ENCODE measurements at regions of chr10 and their contacts with region 1.

Region 1: GRCh38 chr10:67261300-67261797 is 335.5 kb downstream of the LRRTM3 start:
- DNase-seq: no peak
- ATAC-seq: no peak
- H3K4me3 ChIP-seq: no peak overlapping the region
- H3K27ac ChIP-seq: no peak overlapping the region; the same call in 1 of the 2 replicates
- H3K4me1 ChIP-seq: peaks cover 11% of the 10 kb centered on the region; the same call in 1 of the 2 replicates
- H3K27me3 ChIP-seq: no peaks in the 10 kb centered on the region
- CTCF ChIP-seq: no peak

Region 2: GRCh38 chr10:67015225-67015624 is 246.1 kb before region 1 on chr10:
- CTCF ChIA-PET with region 1: no interaction called
- POLR2A ChIA-PET with region 1: no interaction called
- in situ Hi-C with region 1: no loop called
- intact Hi-C with region 1: no loop called
- DNase-seq: no peak
- ATAC-seq: no peak
- H3K4me3 ChIP-seq: no peak overlapping the region
- H3K27ac ChIP-seq: no peak overlapping the region
- H3K4me1 ChIP-seq: no peaks in the 10 kb centered on the region
- H3K27me3 ChIP-seq: no peaks in the 10 kb centered on the region
- CTCF ChIP-seq: no peak

Region 3: DNA sequence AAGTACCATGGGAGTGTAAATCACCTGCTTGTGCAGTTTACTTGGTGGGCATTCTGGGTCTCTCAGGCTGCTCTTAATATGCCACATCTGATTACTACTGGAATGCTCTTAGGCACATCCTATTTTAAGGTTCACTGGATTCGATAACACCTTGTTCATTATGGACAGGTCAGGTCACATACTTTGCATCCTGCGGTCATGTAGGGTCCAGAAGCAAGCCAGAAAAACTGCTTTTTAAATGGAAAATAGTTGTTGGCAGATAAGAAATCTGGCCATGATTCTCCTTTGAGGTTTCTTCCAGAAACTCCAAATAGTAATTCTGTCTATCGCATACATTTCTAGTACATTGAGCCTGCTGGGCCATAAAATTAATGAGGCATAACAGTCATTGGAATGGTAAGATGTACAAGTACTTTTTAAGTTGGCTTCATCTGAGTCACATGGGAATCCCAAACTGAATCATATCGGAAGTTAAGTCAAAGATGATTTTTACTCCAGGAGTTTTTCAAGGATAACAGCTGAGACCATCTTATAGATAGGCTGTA is 36.4 kb after region 1 on chr10:
- CTCF ChIA-PET with region 1: no interaction called
- POLR2A ChIA-PET with region 1: no interaction called
- in situ Hi-C with region 1: no loop called
- intact Hi-C with region 1: no loop called
- DNase-seq: no peak
- ATAC-seq: no peak
- H3K4me3 ChIP-seq: no peak overlapping the region
- H3K27ac ChIP-seq: no peak overlapping the region
- H3K4me1 ChIP-seq: no peaks in the 10 kb centered on the region
- H3K27me3 ChIP-seq: no peaks in the 10 kb centered on the region
- CTCF ChIP-seq: no peak

Region 4: DNA sequence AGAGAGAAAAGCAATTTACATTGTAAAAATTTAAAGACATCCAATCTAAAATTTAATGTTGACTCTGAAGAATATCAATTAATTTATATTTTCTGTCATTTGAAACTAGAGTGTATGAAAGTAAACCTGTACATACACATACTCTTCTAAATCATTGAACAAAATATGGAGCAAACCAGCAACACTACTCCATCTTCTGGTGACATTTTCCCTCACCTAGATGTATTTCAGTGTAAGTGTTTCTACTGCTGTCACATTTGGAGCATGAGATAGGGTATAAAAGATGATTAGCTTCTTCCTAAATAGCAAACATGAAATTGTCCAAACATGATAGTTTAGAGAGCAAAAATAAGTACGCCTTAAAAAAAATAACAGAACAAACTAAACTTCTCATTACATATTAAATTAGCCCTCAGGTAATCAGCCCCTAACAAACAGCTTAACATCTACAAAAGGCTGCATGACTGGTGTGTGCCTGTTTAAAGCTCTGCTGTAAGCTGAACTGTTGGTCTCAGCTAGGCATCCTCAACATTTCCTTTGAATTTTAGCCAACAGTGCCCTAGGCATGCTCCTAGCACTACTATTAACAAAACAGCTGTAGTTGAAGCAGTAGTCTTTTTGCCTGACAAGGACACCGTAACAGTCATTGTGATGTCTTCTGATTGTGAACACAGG is 244.9 kb after region 1 on chr10:
- CTCF ChIA-PET with region 1: no interaction called
- POLR2A ChIA-PET with region 1: interaction called, 10 read pairs
- in situ Hi-C with region 1: no loop called
- intact Hi-C with region 1: no loop called
- DNase-seq: no peak
- ATAC-seq: peak; percentile 68; the same call in 1 of the 2 replicates
- H3K4me3 ChIP-seq: no peak overlapping the region
- H3K27ac ChIP-seq: no peak overlapping the region; the same call in 1 of the 2 replicates
- H3K4me1 ChIP-seq: 0 out of 2 replicates have a peak, but pooled peaks cover 4% of the 10 kb centered on the region
- H3K27me3 ChIP-seq: no peaks in the 10 kb centered on the region; the same call in 1 of the 2 replicates
- CTCF ChIP-seq: peak; percentile 21; the same call in 1 of the 2 replicates